A549 (cell line): ENCODE measurements at regions of chr15 and their contacts with region 1.

Region 1: GRCh38 chr15:79923515-79924395 is 26.9 kb upstream of the MTHFS start:
- DNase-seq: peak; percentile 98 to 99
- ATAC-seq: peak; percentile 97
- H3K4me3 ChIP-seq: peak overlapping the region; percentile 90
- H3K27ac ChIP-seq: peak overlapping the region; percentile 96 to 97
- H3K4me1 ChIP-seq: no peaks in the 10 kb centered on the region; the same call in 2 of the 3 replicates
- CTCF ChIP-seq: no peak
- EP300 ChIP-seq: no peak
- POLR2A ChIP-seq: peak; percentile 92
- RAD21 ChIP-seq: no peak; a peak in 1 of 5 replicates

Region 2: GRCh38 chr15:79896637-79897379 is 26.9 kb before region 1 on chr15 and contains the start of gene MTHFS:
- CTCF ChIA-PET with region 1: interaction called, 7 read pairs
- POLR2A ChIA-PET with region 1: interaction called, 51 read pairs
- DNase-seq: peak; percentile 83 to 92
- ATAC-seq: peak; percentile 96 to 98
- H3K4me3 ChIP-seq: peak within 1 kb of the TSS; percentile 65
- H3K27ac ChIP-seq: peak within 1 kb of the TSS; percentile 93 to 98
- H3K4me1 ChIP-seq: peaks cover 37% of the 10 kb centered on the region
- CTCF ChIP-seq: peak; percentile 74
- EP300 ChIP-seq: no peak
- POLR2A ChIP-seq: peak; percentile 95
- RAD21 ChIP-seq: peak; percentile 60 to 85
- polyA plus RNA-seq, gene MTHFS: 125 and 158 TPM in 2 replicates

Region 3: DNA sequence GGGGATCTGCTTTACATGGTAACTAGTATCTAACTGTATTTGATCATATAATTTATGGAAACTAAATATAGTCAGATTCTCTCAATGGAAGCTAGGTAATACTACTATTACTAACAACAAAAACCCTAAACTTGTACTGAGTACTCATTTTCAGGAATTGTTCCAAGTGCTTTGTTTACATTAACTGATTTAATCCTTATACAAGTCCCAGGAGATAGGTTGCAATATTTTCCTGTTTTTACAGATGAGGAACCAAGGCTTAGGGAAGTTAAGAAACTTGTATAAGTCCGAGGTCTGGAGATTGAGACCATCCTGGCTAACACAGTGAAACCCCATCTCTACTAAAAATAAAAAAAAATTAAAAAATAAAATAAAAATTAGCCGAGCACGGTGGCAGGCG is 19.5 kb before region 1 on chr15:
- CTCF ChIA-PET with region 1: interaction called, 5 read pairs
- POLR2A ChIA-PET with region 1: interaction called, 51 read pairs
- DNase-seq: no peak
- ATAC-seq: no peak
- H3K4me3 ChIP-seq: no peak overlapping the region
- H3K27ac ChIP-seq: no peak overlapping the region
- H3K4me1 ChIP-seq: peaks cover 21% of the 10 kb centered on the region; the same call in 2 of the 3 replicates
- CTCF ChIP-seq: no peak
- EP300 ChIP-seq: no peak
- POLR2A ChIP-seq: no peak
- RAD21 ChIP-seq: no peak

Region 4: DNA sequence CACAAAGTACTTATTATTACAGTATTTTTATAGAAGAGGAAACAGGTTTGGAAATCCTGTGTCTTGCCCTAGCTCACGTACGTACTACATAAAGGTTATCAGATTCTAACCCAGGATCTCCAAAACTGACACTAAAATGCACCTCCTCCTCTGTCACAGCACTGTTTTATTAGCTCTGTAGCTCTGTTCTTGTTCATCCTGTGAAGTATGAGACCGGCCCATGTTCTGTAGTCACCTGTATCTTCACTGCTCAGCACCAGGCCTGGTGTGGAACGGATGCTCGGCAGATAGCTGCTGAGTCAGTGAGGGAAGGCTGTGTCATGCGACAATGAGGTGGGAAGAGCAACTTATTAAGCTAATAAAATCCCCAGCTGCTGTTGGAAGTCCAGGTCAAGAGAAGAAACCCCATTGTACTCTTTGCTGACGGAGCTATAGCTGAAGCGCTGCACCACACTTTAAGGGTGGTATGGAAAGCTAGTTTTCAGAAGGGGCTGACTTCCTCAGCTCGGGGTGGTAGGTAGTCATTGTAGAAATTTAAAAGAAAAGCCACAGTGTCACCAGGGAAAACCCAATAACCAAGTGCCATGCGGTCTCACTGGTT is 24.4 kb after region 1 on chr15:
- CTCF ChIA-PET with region 1: interaction called, 4 read pairs
- POLR2A ChIA-PET with region 1: interaction called, 11 read pairs
- DNase-seq: peak in 1 of 2 experiments; percentile 52
- ATAC-seq: peak; percentile 52 to 54; a peak in 4 of 6 replicates
- H3K4me3 ChIP-seq: no peak overlapping the region
- H3K27ac ChIP-seq: peak overlapping the region; percentile 20 to 47; a peak in 4 of 6 replicates
- H3K4me1 ChIP-seq: peaks cover 27% of the 10 kb centered on the region
- CTCF ChIP-seq: no peak
- EP300 ChIP-seq: no peak
- POLR2A ChIP-seq: no peak
- RAD21 ChIP-seq: no peak

Region 5: GRCh38 chr15:79970624-79971434 is 47.1 kb after region 1 on chr15 and contains the start of gene BCL2A1:
- CTCF ChIA-PET with region 1: interaction called, 3 read pairs
- POLR2A ChIA-PET with region 1: interaction called, 33 read pairs
- DNase-seq: peak; percentile 58 to 87
- ATAC-seq: peak; percentile 71 to 80
- H3K4me3 ChIP-seq: peak within 1 kb of the TSS; percentile 38
- H3K27ac ChIP-seq: peak within 1 kb of the TSS; percentile 44 to 71
- H3K4me1 ChIP-seq: peaks cover 55% of the 10 kb centered on the region
- CTCF ChIP-seq: no peak
- EP300 ChIP-seq: peak in 1 of 2 experiments; percentile 56; a peak in 1 of 5 replicates
- POLR2A ChIP-seq: no peak
- RAD21 ChIP-seq: peak in 1 of 2 experiments; percentile 19; a peak in 1 of 5 replicates
- polyA plus RNA-seq, gene BCL2A1: 14.5 and 20.1 TPM in 2 replicates

Region 6: GRCh38 chr15:80058851-80059785 is 135.4 kb after region 1 on chr15 and contains the start of gene ZFAND6:
- CTCF ChIA-PET with region 1: interaction called, 3 read pairs
- POLR2A ChIA-PET with region 1: interaction called, 13 read pairs
- DNase-seq: peak; percentile 94 to 96
- ATAC-seq: peak; percentile 92 to 96
- H3K4me3 ChIP-seq: peak within 1 kb of the TSS; percentile 80
- H3K27ac ChIP-seq: peak within 1 kb of the TSS; percentile 90 to 97
- H3K4me1 ChIP-seq: peaks cover 29% of the 10 kb centered on the region
- CTCF ChIP-seq: no peak; the same call in 2 of the 3 replicates
- EP300 ChIP-seq: no peak
- POLR2A ChIP-seq: peak; percentile 91
- RAD21 ChIP-seq: peak; percentile 26 to 41; a peak in 1 of 5 replicates
- polyA plus RNA-seq, gene ZFAND6: 271 and 307 TPM in 2 replicates